ENCODE measurements at regions of chr17 and their contacts with region 1.

Region 1: DNA sequence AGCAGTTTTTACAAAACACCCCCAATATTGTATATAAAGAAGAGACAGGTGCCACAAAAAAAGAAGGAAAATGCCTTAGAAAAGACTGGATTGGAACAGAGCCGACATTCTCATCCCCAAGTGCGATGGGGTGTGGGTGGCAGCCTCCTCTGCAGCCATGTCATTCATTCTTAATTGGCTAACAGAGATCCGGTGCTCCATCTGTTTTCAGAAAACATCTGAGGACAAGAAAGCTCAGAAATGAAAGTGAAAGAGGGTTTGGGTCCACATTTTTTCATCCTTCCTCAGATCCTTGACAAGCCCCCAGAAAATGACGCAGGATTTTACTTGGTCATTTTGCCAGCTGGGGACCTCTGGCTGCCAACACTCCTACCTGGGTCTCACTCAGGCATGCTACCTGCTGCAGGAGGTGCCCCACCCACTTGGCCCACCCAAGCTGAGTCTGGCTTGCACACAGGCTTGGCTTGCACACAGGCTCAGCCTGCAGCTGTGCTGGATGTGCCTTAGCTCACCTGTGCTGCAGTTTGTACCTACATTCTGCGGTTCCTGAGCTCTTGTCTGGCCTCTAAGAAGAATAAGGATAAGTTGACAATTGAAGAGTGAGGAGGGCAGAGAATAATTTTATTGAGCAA is 21.9 kb downstream of the KIF2B start:
- DNase-seq: no peak
- H3K4me3 ChIP-seq: no peak overlapping the region
- H3K27ac ChIP-seq: no peak overlapping the region
- H3K27me3 ChIP-seq: peaks cover 0 to 3% (median 0%) of the 10 kb centered on the region in 45 donors
- CTCF ChIP-seq: no peak

Region 2: DNA sequence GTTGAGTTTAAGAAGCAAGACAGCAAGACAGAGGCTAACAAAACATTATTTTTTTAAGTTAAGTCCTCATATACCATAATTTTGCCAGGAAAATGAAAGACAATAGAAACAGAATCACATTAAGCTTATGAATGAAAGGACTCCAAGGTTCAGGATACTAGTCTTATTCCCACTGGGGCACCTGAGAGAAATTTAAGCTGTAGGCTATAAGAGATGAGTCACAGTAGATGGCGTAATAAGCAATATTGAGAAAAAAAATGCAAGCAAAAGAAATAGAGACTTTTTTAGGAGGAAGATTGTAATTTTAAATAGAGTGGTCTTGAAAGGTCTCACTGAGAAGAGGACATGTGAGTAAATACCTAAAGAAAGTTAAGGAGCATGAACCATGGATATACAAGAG is 79.0 kb before region 1 on chr17:
- intact Hi-C with region 1: no loop called
- DNase-seq: no peak
- H3K4me3 ChIP-seq: no peak overlapping the region
- H3K27ac ChIP-seq: no peak overlapping the region
- H3K27me3 ChIP-seq: peaks cover 0 to 6% (median 0%) of the 10 kb centered on the region in 45 donors
- CTCF ChIP-seq: no peak

Region 3: GRCh38 chr17:53907435-53907834 is 62.8 kb after region 1 on chr17:
- intact Hi-C with region 1: loop called in 1 of 2 experiments (anchors 10 kb)
- DNase-seq: no peak
- H3K4me3 ChIP-seq: no peak overlapping the region
- H3K27ac ChIP-seq: no peak overlapping the region
- H3K27me3 ChIP-seq: no peaks in the 10 kb centered on the region
- CTCF ChIP-seq: no peak

Measured in dorsolateral prefrontal cortex (tissue), 120 donors.